ENCODE measurements at regions of chr4 and their contacts with region 1.

Region 1: GRCh38 chr4:183659029-183659871 is at the starts of genes RWDD4 and TRAPPC11:
- DNase-seq: peak; percentile 96 to 99
- H3K4me3 ChIP-seq: peak within 1 kb of the TSS; percentile 70 to 82
- H3K27ac ChIP-seq: peak within 1 kb of the TSS; percentile 90 to 92
- H3K4me1 ChIP-seq: peaks cover 0 to 36% (median 21%) of the 10 kb centered on the region in 4 donors
- H3K27me3 ChIP-seq: no peaks in the 10 kb centered on the region
- CTCF ChIP-seq: peak; percentile 39 to 51

Region 2: GRCh38 chr4:183444214-183445066 is 214.8 kb before region 1 on chr4 and contains the start of gene CDKN2AIP:
- intact Hi-C with region 1: loop called (anchors 10 kb)
- DNase-seq: peak; percentile 91 to 96
- H3K4me3 ChIP-seq: peak within 1 kb of the TSS; percentile 84 to 97
- H3K27ac ChIP-seq: peak within 1 kb of the TSS; percentile 93 to 98
- H3K4me1 ChIP-seq: peaks cover 0 to 50% (median 27%) of the 10 kb centered on the region in 4 donors
- H3K27me3 ChIP-seq: no peaks in the 10 kb centered on the region
- CTCF ChIP-seq: peak in 1 of 2 experiments; percentile 8

Region 3: GRCh38 chr4:183471946-183472708 is 187.1 kb before region 1 on chr4:
- intact Hi-C with region 1: loop called (anchors 10 kb)
- DNase-seq: peak; percentile 86 to 93
- H3K4me3 ChIP-seq: peak overlapping the region; percentile 16 to 22
- H3K27ac ChIP-seq: no peak overlapping the region
- H3K4me1 ChIP-seq: no peaks in the 10 kb centered on the region
- H3K27me3 ChIP-seq: no peaks in the 10 kb centered on the region
- CTCF ChIP-seq: peak; percentile 74 to 80

Region 4: GRCh38 chr4:183504064-183504929 is 155.0 kb before region 1 on chr4:
- intact Hi-C with region 1: loop called (anchors 2 kb)
- DNase-seq: peak; percentile 99 to 100
- H3K4me3 ChIP-seq: peak overlapping the region; percentile 79 to 92
- H3K27ac ChIP-seq: peak overlapping the region; percentile 92 to 94
- H3K4me1 ChIP-seq: peaks cover 0 to 19% (median 3%) of the 10 kb centered on the region in 4 donors
- H3K27me3 ChIP-seq: no peaks in the 10 kb centered on the region
- CTCF ChIP-seq: peak in 1 of 2 experiments; percentile 23